Aorta (tissue), 5 donors: ENCODE measurements at regions of chr4 and their contacts with region 1.

Region 1: DNA sequence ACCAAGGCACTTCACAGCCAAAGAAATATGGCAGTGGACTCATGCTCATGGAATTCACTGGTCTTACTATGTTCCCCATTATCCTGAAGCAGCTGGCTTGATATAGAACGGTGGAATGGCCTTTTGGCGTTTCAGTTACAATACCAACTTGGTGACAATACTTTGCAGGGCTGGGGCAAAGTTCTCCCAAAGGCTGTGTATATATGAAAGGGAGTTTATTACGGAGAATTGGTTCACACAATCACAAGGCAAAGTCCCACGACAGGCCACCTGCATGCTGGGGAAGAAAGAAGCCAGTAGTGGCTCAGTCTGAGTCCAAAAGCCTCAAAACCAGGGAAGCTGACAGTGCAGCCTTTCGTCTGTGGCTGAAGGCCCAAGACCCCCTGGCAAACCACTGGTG is 50.8 kb upstream of the SMARCAD1 start:
- DNase-seq: no peak
- ATAC-seq: no peak
- H3K4me3 ChIP-seq: no peak overlapping the region
- H3K27ac ChIP-seq: no peak overlapping the region
- H3K4me1 ChIP-seq: no peaks in the 10 kb centered on the region
- H3K27me3 ChIP-seq: no peaks in the 10 kb centered on the region

Region 2: DNA sequence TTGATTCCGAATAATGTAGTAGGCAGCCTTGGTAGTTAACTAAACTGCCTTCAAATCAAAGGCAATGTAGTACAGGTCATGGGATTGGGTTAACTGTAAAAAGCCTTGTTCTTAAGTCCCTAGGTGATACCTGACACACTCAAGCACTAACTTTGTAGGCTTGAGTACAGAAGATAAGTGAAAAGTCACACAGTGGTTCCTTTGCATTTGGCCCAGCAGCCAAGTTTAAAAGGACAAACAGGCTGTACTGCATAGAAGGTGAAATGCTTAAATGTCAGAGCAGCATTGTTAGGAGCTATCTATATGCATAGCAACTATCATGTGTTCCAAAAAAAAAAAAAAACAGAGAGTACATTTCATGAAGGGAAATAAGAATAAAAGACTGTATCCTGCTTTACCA is 149.9 kb before region 1 on chr4:
- intact Hi-C with region 1: loop called in 1 of 2 experiments (anchors 5 kb)
- DNase-seq: no peak
- ATAC-seq: no peak
- H3K4me3 ChIP-seq: no peak overlapping the region
- H3K27ac ChIP-seq: no peak overlapping the region
- H3K4me1 ChIP-seq: no peaks in the 10 kb centered on the region
- H3K27me3 ChIP-seq: no peaks in the 10 kb centered on the region

Region 3: GRCh38 chr4:94235825-94236224 is 79.0 kb after region 1 on chr4:
- intact Hi-C with region 1: no loop called
- DNase-seq: no peak
- ATAC-seq: no peak
- H3K4me3 ChIP-seq: no peak overlapping the region
- H3K27ac ChIP-seq: no peak overlapping the region
- H3K4me1 ChIP-seq: no peaks in the 10 kb centered on the region
- H3K27me3 ChIP-seq: no peaks in the 10 kb centered on the region